Panc1 (cell line): ENCODE measurements at regions of chr19 and their contacts with region 1.

Region 1: GRCh38 chr19:850221-850978 is 1.7 kb upstream of the ELANE start:
- DNase-seq: no peak
- ATAC-seq: peak; percentile 89
- H3K4me3 ChIP-seq: peak overlapping the region in 1 of 2 experiments; percentile 15; a peak in 1 of 4 replicates
- H3K27ac ChIP-seq: peak overlapping the region; percentile 55
- H3K4me1 ChIP-seq: peaks cover 11% of the 10 kb centered on the region
- H3K27me3 ChIP-seq: no peaks in the 10 kb centered on the region
- CTCF ChIP-seq: no peak

Region 2: GRCh38 chr19:862581-863314 is 12.3 kb after region 1 on chr19:
- CTCF ChIA-PET with region 1: no interaction called
- POLR2A ChIA-PET with region 1: interaction called, 17 read pairs
- in situ Hi-C with region 1: no loop called
- intact Hi-C with region 1: no loop called
- DNase-seq: no peak
- ATAC-seq: peak; percentile 15; the same call in 1 of the 2 replicates
- H3K4me3 ChIP-seq: no peak overlapping the region
- H3K27ac ChIP-seq: no peak overlapping the region
- H3K4me1 ChIP-seq: peaks cover 7% of the 10 kb centered on the region
- H3K27me3 ChIP-seq: no peaks in the 10 kb centered on the region
- CTCF ChIP-seq: no peak

Region 3: GRCh38 chr19:1016647-1017114 is 166.3 kb after region 1 on chr19:
- CTCF ChIA-PET with region 1: interaction called, 13 read pairs
- POLR2A ChIA-PET with region 1: no interaction called
- in situ Hi-C with region 1: no loop called
- intact Hi-C with region 1: no loop called
- DNase-seq: no peak
- ATAC-seq: peak; percentile 24
- H3K4me3 ChIP-seq: no peak overlapping the region
- H3K27ac ChIP-seq: peak overlapping the region; percentile 44; the same call in 1 of the 2 replicates
- H3K4me1 ChIP-seq: peaks cover 20% of the 10 kb centered on the region
- H3K27me3 ChIP-seq: no peaks in the 10 kb centered on the region
- CTCF ChIP-seq: no peak